GM18951 (cell line): ENCODE measurements at regions of chrX and their contacts with region 1.

Region 1: GRCh38 chrX:115912372-115912897 is 258.1 kb upstream of the AGTR2 start:
- POLR2A ChIP-seq: no peak

Region 2: GRCh38 chrX:115713481-115713880 is 199.0 kb before region 1 on chrX:
- in situ Hi-C with region 1: loop called (anchors 25 kb)
- POLR2A ChIP-seq: no peak